Psoas muscle (tissue), 8 donors: ENCODE measurements at regions of chr1 and their contacts with region 1.

Region 1: DNA sequence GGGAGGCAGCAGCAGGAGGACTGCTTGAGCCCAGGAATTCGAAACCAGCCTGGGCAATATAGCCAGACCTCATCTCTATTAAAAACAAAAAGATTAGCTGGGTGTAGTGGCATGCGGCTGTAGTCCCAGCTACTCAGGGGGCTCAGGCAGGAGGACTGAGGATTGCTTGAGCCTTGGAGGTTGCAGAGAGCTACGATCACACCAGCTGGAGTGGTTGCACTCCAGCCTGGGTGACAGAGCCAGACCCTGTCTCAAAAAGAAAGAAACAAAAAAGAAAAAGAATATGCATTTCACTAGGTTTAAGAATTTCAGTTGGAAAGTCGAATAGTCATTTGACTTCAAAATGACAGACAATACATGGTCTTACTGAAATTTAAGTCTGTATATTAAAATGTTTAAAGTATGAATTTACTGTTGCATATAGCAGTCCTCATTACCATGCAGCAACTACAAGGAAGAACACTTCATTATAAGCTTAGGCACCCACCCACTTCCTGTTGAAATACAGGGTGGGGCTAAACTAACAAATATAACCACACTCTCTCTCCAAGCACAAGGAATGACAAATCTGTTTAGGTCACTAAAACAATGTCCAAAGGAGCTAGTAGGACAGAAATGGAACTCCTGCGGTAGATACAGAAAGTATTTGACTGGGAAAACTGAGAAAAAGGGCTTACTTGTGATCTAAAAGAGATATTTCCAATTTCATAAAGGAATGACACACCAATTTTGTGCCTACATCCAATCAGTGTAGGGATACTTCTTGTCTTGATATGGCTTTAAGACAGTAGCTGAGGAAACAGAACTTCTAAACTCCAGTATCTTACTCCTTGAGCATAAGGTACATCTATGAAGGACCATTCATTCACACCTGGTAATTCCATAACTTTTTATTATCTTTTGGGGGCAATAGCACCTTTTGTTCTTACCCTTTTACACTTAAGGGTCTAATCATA is 44.1 kb downstream of the GPR3 start:
- DNase-seq: no peak
- ATAC-seq: peak; percentile 40 to 78 (median 68)
- H3K4me3 ChIP-seq: no peak overlapping the region
- H3K27ac ChIP-seq: peak overlapping the region; percentile 59
- H3K4me1 ChIP-seq: peaks cover 72% of the 10 kb centered on the region
- H3K27me3 ChIP-seq: no peaks in the 10 kb centered on the region
- CTCF ChIP-seq: no peak

Region 2: DNA sequence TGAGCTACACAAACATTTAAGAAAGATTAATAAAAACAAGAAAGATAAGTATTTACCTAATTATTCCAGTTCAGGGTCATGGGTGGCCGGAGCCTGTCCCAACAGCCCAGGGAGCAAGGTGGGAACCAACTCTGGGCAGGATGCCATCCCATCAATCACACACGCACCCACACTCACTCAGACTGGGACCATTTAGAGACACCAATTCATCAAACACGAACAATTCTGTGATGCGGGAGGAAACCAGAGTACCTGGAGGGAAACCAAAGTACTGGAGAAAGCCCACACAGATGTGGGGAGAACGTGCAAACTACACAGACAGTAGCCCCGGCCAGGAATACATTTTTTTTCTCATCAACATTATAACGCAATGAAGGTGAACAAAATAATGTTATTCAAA is 37.3 kb after region 1 on chr1:
- intact Hi-C with region 1: loop called in 1 of 2 experiments (anchors 5 kb)
- DNase-seq: no peak
- ATAC-seq: peak in 2 of 4 donors; percentile 16 to 36
- H3K4me3 ChIP-seq: no peak overlapping the region
- H3K27ac ChIP-seq: no peak overlapping the region
- H3K4me1 ChIP-seq: peaks cover 49% of the 10 kb centered on the region
- H3K27me3 ChIP-seq: no peaks in the 10 kb centered on the region
- CTCF ChIP-seq: no peak